Transverse colon (tissue), 4 donors: ENCODE measurements at regions of chr2 and their contacts with region 1.

Region 1: DNA sequence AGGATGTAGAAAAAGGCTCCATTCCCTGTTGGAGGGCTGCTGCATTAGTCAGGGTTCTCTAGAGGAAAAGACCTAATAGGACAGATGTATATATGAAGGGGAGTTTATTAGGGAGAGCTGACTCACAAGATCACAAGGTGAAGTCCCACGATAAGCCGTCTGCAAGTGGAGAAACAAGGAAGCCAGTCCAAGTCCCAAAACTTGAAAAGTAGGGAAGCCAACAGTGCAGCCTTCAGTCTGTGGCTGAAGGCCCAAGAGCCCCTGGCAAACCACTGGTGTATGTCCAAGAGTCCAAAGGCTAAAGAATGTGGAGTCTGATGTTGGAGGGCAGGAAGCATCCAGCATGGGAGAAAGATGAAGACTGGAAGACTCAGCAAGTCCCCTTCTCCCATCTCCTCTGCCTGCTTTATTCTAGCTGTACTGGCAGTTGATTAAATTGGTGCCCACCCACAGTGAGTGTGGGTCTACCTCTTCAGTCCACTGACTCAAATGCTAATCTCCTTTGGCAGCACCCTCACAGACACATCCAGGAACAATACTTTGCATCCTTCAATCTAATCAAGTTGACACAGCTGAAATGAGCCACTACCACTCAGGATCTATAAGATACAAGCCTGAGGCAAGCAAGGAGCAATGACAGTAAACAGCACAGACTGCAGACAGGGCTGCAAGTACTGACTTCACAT is 30.0 kb upstream of the ATG16L1 start:
- DNase-seq: no peak
- H3K4me3 ChIP-seq: no peak overlapping the region
- H3K27ac ChIP-seq: no peak overlapping the region
- H3K4me1 ChIP-seq: no peaks in the 10 kb centered on the region
- H3K27me3 ChIP-seq: no peaks in the 10 kb centered on the region
- CTCF ChIP-seq: no peak
- EP300 ChIP-seq: no peak
- POLR2A ChIP-seq: no peak

Region 2: GRCh38 chr2:233185963-233186362 is 35.6 kb before region 1 on chr2:
- in situ Hi-C with region 1: no loop called
- intact Hi-C with region 1: loop called (anchors 2 kb)
- DNase-seq: no peak
- H3K4me3 ChIP-seq: no peak overlapping the region
- H3K27ac ChIP-seq: no peak overlapping the region
- H3K4me1 ChIP-seq: peaks cover 0 to 3% (median 0%) of the 10 kb centered on the region in 4 donors
- H3K27me3 ChIP-seq: no peaks in the 10 kb centered on the region
- CTCF ChIP-seq: no peak
- EP300 ChIP-seq: no peak
- POLR2A ChIP-seq: no peak